Ascending aorta (tissue), 2 donors: ENCODE measurements at regions of chr3 and their contacts with region 1.

Region 1: DNA sequence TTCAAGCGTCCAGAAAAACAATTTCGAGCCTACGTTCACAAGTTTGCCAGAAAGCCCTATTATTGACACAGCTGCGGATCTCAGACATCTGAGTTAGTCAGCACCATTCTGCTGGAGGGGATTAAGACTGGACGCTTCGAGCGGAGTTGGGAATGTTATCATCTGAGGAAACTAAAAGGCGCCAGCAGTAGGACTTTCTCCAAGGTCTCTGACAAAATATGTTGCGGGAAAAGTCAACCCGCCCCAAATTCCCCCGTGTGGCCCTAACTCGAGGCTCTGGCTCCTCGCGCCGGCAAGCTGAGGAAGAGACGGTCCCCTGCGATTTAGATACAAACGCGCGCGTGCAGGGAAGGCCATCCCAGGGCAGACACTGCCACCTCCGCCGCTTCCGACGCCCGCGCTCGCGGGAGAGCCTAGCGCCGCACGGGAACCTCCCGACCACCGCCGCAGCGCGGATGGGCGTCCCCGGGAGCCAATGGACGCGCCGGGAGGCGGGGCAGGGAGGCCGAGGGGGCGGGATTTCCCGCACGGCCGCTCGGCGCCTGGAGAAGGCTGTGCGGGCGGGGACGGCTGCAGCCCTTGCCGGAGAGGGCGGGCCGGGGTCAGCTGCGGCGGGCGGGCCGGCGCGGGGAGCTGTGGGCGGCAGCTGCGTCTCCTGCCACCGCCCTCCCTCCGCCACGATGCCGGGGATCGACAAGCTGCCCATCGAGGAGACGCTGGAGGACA is at the start of gene APPL1:
- DNase-seq: peak; percentile 74 to 95
- H3K4me3 ChIP-seq: peak within 1 kb of the TSS; percentile 72 to 97
- H3K27ac ChIP-seq: peak within 1 kb of the TSS; percentile 76 to 96
- H3K4me1 ChIP-seq: peaks cover 3 to 14% of the 10 kb centered on the region in 2 donors
- H3K27me3 ChIP-seq: no peaks in the 10 kb centered on the region
- CTCF ChIP-seq: no peak
- total RNA-seq, gene APPL1: 63.1 TPM

Region 2: GRCh38 chr3:56556908-56557830 is 670.2 kb before region 1 on chr3 and contains the start of gene CCDC66:
- intact Hi-C with region 1: loop called (anchors 5 kb)
- DNase-seq: peak; percentile 84 to 96
- H3K4me3 ChIP-seq: peak within 1 kb of the TSS; percentile 70 to 88
- H3K27ac ChIP-seq: peak within 1 kb of the TSS; percentile 84 to 89
- H3K4me1 ChIP-seq: peaks cover 5 to 10% of the 10 kb centered on the region in 2 donors
- H3K27me3 ChIP-seq: no peaks in the 10 kb centered on the region
- CTCF ChIP-seq: peak; percentile 27 to 65 (median 64)
- total RNA-seq, gene CCDC66: 11.4 TPM

Region 3: GRCh38 chr3:57007513-57008460 is 219.6 kb before region 1 on chr3:
- intact Hi-C with region 1: loop called (anchors 2 kb)
- DNase-seq: peak; percentile 55 to 90
- H3K4me3 ChIP-seq: peak overlapping the region; percentile 33 to 36
- H3K27ac ChIP-seq: peak overlapping the region; percentile 87
- H3K4me1 ChIP-seq: peaks cover 12 to 24% of the 10 kb centered on the region in 2 donors
- H3K27me3 ChIP-seq: no peaks in the 10 kb centered on the region
- CTCF ChIP-seq: no peak

Region 4: GRCh38 chr3:57164657-57165573 is 62.5 kb before region 1 on chr3 and contains the start of gene IL17RD:
- intact Hi-C with region 1: loop called (anchors 2 kb)
- DNase-seq: peak in 1 of 2 donors; percentile 86
- H3K4me3 ChIP-seq: peak within 1 kb of the TSS; percentile 92 to 95
- H3K27ac ChIP-seq: peak within 1 kb of the TSS in 1 of 2 donors; percentile 16
- H3K4me1 ChIP-seq: peaks cover 4 to 6% of the 10 kb centered on the region in 2 donors
- H3K27me3 ChIP-seq: no peaks in the 10 kb centered on the region
- CTCF ChIP-seq: no peak
- total RNA-seq, gene IL17RD: 3.4 TPM

Region 5: GRCh38 chr3:57199895-57200297 is 27.5 kb before region 1 on chr3 and contains the start of gene HESX1:
- intact Hi-C with region 1: no loop called
- DNase-seq: no peak
- H3K4me3 ChIP-seq: no peak within 1 kb of the TSS
- H3K27ac ChIP-seq: no peak within 1 kb of the TSS
- H3K4me1 ChIP-seq: no peaks in the 10 kb centered on the region
- H3K27me3 ChIP-seq: no peaks in the 10 kb centered on the region
- CTCF ChIP-seq: no peak
- total RNA-seq, gene HESX1: not detected

Region 6: GRCh38 chr3:57597122-57597923 is 370.0 kb after region 1 on chr3 and contains the start of gene ARF4:
- intact Hi-C with region 1: loop called (anchors 1 kb)
- DNase-seq: peak; percentile 99 to 100
- H3K4me3 ChIP-seq: peak within 1 kb of the TSS; percentile 80 to 95
- H3K27ac ChIP-seq: peak within 1 kb of the TSS; percentile 96 to 99
- H3K4me1 ChIP-seq: peaks cover 0 to 29% of the 10 kb centered on the region in 2 donors
- H3K27me3 ChIP-seq: no peaks in the 10 kb centered on the region
- CTCF ChIP-seq: peak in 1 of 3 experiments; percentile 27
- total RNA-seq, gene ARF4: 50.0 TPM

Region 7: DNA sequence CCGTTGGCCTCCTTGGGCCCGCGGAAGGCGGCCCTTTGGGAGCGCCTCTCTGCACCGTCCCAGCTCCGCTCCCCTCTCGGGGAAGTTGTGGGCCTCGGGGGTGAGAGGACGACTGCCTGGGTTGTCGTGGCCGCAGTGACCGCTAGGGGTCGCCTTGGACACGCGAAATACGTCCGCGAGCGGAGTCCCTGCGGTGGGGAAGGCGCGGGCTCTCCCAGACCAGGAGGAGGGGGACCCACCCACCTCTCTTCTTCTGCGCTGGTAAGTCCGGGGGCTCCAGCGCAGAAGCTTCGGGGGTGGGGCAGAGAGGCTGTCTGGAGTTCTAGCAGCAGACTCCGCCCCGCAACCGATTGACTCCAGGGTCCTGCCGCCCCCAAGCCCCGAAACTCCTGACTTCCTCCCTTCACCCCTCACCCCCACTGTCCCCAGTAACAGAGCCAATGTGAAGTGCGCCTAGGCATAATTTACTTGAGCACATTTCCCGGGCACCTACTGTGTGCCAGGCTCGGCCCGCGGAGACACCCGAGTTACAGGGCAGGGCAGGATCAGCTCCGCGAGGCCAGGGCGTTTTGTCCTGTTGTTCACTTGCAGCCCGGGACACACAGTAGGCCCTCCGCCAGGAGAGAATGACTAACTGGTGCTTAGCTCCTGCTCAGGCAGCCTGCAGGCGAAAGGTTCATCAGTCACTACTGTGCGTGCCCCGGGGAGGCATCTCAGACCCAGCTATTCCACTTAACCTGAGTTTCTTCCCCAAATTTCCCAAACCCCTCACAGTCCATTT is 950.6 kb after region 1 on chr3:
- intact Hi-C with region 1: loop called (anchors 10 kb)
- DNase-seq: peak; percentile 51 to 94
- H3K4me3 ChIP-seq: peak overlapping the region; percentile 57 to 62
- H3K27ac ChIP-seq: no peak overlapping the region
- H3K4me1 ChIP-seq: peaks cover 3 to 17% of the 10 kb centered on the region in 2 donors
- H3K27me3 ChIP-seq: no peaks in the 10 kb centered on the region
- CTCF ChIP-seq: peak; percentile 93 to 95 (median 93)